Activated CD4-positive, alpha-beta memory T cell treated with anti-CD3 and anti-CD28 coated beads for 36 hours (primary cell): ENCODE measurements at regions of chr16 and their contacts with region 1.

Region 1: DNA sequence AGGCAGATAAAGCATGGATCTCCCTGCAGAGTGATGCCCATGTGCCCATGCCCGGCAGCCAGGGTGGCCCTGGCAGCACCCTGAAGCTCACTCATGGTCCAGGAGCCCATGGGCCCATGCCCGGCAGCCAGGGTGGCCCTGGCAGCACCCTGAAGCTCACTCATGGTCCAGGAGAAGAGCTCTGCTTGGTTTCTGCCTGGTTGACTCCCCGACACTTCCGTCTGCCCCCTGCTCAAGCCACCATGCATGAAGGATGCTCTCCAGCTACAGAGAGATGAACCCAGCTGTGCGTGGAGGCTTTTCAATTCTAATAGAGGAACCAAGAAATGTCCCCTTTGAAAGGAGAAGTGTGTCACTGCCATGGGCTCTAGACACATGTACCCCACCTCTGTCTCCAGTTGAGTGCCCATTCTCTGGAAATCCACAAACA is 8.7 kb downstream of the CCL17 start:
- DNase-seq: no peak
- H3K4me3 Mint-ChIP-seq: no peak overlapping the region
- H3K27ac Mint-ChIP-seq: no peak overlapping the region
- H3K4me1 Mint-ChIP-seq: peaks cover 10% of the 10 kb centered on the region
- H3K27me3 Mint-ChIP-seq: no peaks in the 10 kb centered on the region

Region 2: GRCh38 chr16:57432989-57433388 is 19.7 kb after region 1 on chr16:
- CTCF ChIA-PET with region 1: interaction called, 24 read pairs
- POLR2A ChIA-PET with region 1: no interaction called
- intact Hi-C with region 1: no loop called
- DNase-seq: no peak
- H3K4me3 Mint-ChIP-seq: no peak overlapping the region
- H3K27ac Mint-ChIP-seq: no peak overlapping the region
- H3K4me1 Mint-ChIP-seq: peaks cover 4% of the 10 kb centered on the region
- H3K27me3 Mint-ChIP-seq: no peaks in the 10 kb centered on the region

Region 3: GRCh38 chr16:57447186-57447962 is 34.1 kb after region 1 on chr16 and contains the starts of genes CIAPIN1 and COQ9:
- CTCF ChIA-PET with region 1: interaction called, 14 read pairs
- POLR2A ChIA-PET with region 1: no interaction called
- intact Hi-C with region 1: no loop called
- DNase-seq: peak; percentile 96
- H3K4me3 Mint-ChIP-seq: peak within 1 kb of the TSS; percentile 91
- H3K27ac Mint-ChIP-seq: peak within 1 kb of the TSS; percentile 70
- H3K4me1 Mint-ChIP-seq: peaks cover 28% of the 10 kb centered on the region
- H3K27me3 Mint-ChIP-seq: no peaks in the 10 kb centered on the region
- total RNA-seq, gene CIAPIN1: 34.8 to 38.5 TPM
- total RNA-seq, gene COQ9: 29.8 to 33.0 TPM